Ascending aorta (tissue), 2 donors: ENCODE measurements at regions of chr3 and their contacts with region 1.

Region 1: DNA sequence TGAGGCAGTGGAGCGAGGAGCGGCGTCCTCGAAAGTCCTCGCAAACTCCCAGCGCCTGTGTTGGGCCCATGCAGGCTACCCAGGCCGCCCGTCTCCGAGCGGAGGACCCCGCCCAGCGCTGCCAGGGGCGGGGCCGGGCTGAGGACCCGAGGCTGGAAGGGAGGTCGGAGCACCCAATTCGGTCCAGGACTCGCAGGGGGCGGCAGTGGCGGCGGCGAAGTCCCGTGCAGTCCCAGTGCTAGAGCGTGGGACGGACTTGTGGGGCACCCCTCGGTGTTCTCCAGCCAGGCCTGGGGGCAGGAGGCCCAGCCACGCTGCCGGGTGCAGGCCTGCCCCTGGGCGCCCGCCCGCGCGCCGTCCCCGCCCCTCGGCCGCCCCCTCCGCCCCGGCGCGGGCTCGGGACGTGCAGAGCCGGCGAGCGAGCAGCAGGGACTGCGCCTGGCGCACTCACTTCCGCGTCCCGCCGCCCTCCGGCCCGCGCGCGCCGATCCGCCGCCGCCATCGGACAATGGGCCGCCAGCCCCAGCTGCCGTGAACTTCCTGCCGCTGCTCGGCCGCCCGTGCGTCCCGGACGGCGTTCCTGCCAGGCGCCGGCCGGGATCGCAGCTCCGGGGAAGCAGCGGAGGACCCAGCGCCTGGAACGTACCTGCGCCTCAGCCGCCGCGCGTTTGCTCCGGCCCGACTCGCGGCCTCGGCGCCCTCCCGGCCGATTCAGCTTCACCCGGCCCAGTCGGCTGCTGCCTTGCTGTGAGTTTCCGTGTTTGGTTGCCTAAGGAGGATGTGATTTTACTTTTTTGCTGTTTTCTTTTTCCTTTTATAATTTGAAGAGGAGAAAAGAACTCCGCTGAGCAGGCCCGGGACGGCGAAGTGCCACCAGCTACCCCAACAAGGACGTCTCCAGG is 592 bp upstream of the LIMD1 start:
- DNase-seq: peak in 1 of 2 donors; percentile 85
- H3K4me3 ChIP-seq: peak overlapping the region; percentile 81 to 91
- H3K27ac ChIP-seq: peak overlapping the region; percentile 91 to 96
- H3K4me1 ChIP-seq: peaks cover 17 to 34% of the 10 kb centered on the region in 2 donors
- H3K27me3 ChIP-seq: no peaks in the 10 kb centered on the region
- CTCF ChIP-seq: no peak

Region 2: GRCh38 chr3:45507820-45508317 is 86.1 kb before region 1 on chr3:
- intact Hi-C with region 1: loop called (anchors 5 kb)
- DNase-seq: no peak
- H3K4me3 ChIP-seq: no peak overlapping the region
- H3K27ac ChIP-seq: no peak overlapping the region
- H3K4me1 ChIP-seq: no peaks in the 10 kb centered on the region
- H3K27me3 ChIP-seq: no peaks in the 10 kb centered on the region
- CTCF ChIP-seq: no peak

Region 3: GRCh38 chr3:45656575-45657363 is 62.8 kb after region 1 on chr3:
- intact Hi-C with region 1: loop called (anchors 1 kb)
- DNase-seq: peak; percentile 73 to 98
- H3K4me3 ChIP-seq: no peak overlapping the region
- H3K27ac ChIP-seq: peak overlapping the region; percentile 81
- H3K4me1 ChIP-seq: peaks cover 8 to 40% of the 10 kb centered on the region in 2 donors
- H3K27me3 ChIP-seq: no peaks in the 10 kb centered on the region
- CTCF ChIP-seq: peak; percentile 87 to 96 (median 94)

Region 4: DNA sequence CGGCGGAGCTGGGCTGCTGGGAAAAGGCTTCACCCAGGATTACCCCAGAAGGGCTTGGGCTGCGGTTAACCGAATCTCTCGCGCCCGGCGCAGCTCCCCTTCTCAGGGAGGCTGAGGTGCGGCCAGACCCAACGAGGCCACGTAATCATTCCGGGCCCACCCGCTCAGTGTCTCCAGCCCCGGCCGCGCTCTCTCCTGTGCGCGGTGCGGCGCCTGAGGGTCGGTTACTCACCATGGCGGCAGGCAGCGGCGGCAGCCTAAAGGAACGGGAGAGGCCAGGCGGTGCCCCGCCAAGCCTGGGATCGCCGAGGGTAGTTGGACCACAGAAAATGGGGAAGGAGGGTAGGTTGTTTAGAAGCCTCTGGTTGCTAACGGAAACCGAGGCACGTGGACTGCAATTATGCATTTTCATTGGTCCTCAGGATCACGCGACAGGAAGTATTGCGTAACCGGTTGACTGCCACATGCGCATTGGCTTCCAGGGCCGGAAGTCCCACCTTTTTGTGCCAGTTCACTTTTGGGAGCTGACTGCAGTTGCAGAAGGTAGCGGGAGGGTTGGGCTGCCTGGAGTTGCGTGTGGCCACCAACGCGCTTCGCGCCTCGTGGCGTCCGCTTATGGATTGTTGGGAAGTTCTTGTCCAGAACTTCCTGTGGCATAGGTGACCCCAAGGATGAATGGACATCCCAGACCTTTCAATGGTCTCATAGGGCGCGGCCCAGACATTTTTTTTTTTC is 248.0 kb after region 1 on chr3 and contains the start of gene LZTFL1:
- intact Hi-C with region 1: loop called (anchors 10 kb)
- DNase-seq: peak; percentile 78 to 96
- H3K4me3 ChIP-seq: peak within 1 kb of the TSS; percentile 72 to 79
- H3K27ac ChIP-seq: peak within 1 kb of the TSS in 1 of 2 donors; percentile 16
- H3K4me1 ChIP-seq: no peaks in the 10 kb centered on the region
- H3K27me3 ChIP-seq: no peaks in the 10 kb centered on the region
- CTCF ChIP-seq: no peak
- total RNA-seq, gene LZTFL1: 6.7 TPM

Region 5: DNA sequence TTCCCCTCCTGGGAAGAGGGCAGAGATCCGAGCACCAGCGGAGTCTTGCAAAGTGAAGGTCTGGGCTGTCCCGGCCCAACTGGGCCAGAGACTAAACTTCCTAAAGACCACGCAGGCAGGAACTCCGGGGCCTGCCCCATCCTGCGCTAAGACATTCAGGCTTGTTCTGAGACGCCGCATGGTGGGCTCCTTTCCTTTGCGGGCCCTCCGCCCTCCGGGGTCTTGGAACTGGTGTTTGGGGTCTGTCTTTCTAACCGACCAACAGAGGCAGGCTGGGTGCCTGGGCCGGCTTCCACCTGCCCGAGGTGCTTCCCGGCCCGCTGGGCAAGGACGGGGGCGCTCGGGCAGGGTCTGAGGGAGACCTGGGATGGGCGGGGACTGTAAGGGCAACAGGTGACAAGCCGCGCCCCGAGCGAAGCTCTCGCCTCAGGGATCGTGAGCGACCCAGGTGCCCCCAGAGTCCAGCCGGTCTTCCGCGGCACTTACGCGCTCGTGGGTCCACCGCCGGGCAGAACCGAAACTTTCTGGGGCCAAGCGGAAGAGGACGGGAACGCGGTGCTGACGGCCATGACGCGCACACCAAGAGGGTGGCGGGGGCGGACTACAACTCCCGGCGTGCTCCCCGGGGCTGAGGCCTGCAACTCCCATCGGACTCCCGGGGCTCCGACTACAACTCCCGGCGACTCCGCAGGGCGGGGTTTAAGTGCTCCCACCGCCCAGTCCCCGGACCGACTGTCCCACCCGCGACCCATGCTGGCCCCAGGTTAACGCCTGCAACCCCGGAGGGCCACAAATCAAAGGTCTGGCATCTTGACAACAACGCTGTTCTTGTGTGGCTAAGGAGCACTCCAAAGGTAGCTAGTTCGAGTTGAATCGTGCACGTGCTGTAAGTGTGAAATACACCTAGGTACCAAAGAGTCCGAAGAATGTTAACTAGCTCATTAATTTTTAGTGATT is 401.6 kb after region 1 on chr3 and contains the start of gene FYCO1:
- intact Hi-C with region 1: loop called (anchors 10 kb)
- DNase-seq: peak; percentile 83 to 97
- H3K4me3 ChIP-seq: peak within 1 kb of the TSS; percentile 71 to 90
- H3K27ac ChIP-seq: peak within 1 kb of the TSS; percentile 94 to 99
- H3K4me1 ChIP-seq: peaks cover 15 to 45% of the 10 kb centered on the region in 2 donors
- H3K27me3 ChIP-seq: no peaks in the 10 kb centered on the region
- CTCF ChIP-seq: no peak
- total RNA-seq, gene FYCO1: 56.2 TPM